ENCODE measurements at regions of chr3 and their contacts with region 1.

Region 1: GRCh38 chr3:119240591-119241434 is at the start of gene B4GALT4:
- DNase-seq: peak; percentile 81
- ATAC-seq: peak; percentile 78
- H3K4me3 Mint-ChIP-seq: peak within 1 kb of the TSS; percentile 83
- H3K27ac Mint-ChIP-seq: peak within 1 kb of the TSS; percentile 99
- H3K4me1 Mint-ChIP-seq: peaks cover 36% of the 10 kb centered on the region
- H3K27me3 Mint-ChIP-seq: no peaks in the 10 kb centered on the region
- CTCF ChIP-seq: no peak
- total RNA-seq, gene B4GALT4: 13.3 to 15.2 TPM

Region 2: GRCh38 chr3:119084371-119085072 is 156.3 kb before region 1 on chr3:
- CTCF ChIA-PET with region 1: no interaction called
- POLR2A ChIA-PET with region 1: no interaction called
- intact Hi-C with region 1: no loop called
- DNase-seq: no peak
- ATAC-seq: no peak
- H3K4me3 Mint-ChIP-seq: no peak overlapping the region
- H3K27ac Mint-ChIP-seq: no peak overlapping the region
- H3K4me1 Mint-ChIP-seq: no peaks in the 10 kb centered on the region
- H3K27me3 Mint-ChIP-seq: peaks cover 4% of the 10 kb centered on the region
- CTCF ChIP-seq: no peak

Region 3: GRCh38 chr3:119098619-119099222 is 142.1 kb before region 1 on chr3:
- CTCF ChIA-PET with region 1: interaction called, 12 read pairs
- POLR2A ChIA-PET with region 1: no interaction called
- intact Hi-C with region 1: no loop called
- DNase-seq: peak; percentile 3
- ATAC-seq: no peak
- H3K4me3 Mint-ChIP-seq: no peak overlapping the region
- H3K27ac Mint-ChIP-seq: no peak overlapping the region
- H3K4me1 Mint-ChIP-seq: no peaks in the 10 kb centered on the region
- H3K27me3 Mint-ChIP-seq: peaks cover 2% of the 10 kb centered on the region
- CTCF ChIP-seq: peak; percentile 89

Region 4: DNA sequence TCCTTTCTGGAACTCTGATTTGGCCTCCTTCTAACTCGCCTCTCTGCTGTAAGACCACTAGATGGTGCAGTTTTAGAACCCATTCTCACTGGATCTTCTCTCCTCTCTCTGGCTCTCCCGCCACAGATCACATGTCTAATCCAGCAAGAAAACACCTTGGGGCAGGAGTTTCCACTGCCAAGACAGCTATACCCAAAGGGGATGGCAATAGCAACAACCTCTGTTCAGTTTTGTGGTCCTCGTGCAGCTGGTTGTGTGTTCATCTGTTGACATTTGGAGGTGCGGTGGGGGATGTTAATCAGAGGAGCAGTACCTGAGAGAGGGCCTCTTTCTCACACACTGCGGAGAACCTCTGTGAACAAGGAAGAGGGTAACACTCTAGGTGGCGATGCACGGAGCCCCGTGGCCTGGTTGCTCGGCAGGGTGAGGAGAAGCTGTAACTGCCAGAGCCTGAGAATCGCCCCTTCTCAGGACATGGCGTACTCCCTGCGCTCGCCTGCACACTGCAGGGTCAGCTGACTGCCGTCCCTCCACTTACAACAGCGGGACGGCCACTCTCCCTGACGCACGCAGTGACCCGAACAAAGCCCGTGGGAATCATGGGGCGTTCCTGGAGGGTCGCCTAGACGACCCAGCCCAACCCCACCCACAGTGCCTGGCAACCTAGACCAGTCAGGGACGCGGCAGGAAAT is 95.2 kb before region 1 on chr3 and contains the start of gene TEX55:
- CTCF ChIA-PET with region 1: interaction called, 61 read pairs
- POLR2A ChIA-PET with region 1: interaction called, 6 read pairs
- intact Hi-C with region 1: loop called (anchors 1 kb)
- DNase-seq: peak; percentile 12
- ATAC-seq: peak; percentile 75
- H3K4me3 Mint-ChIP-seq: no peak within 1 kb of the TSS
- H3K27ac Mint-ChIP-seq: no peak within 1 kb of the TSS
- H3K4me1 Mint-ChIP-seq: peaks cover 3% of the 10 kb centered on the region
- H3K27me3 Mint-ChIP-seq: no peaks in the 10 kb centered on the region
- CTCF ChIP-seq: peak; percentile 69
- total RNA-seq, gene TEX55: not detected

Region 5: GRCh38 chr3:119352849-119353502 is 112.2 kb after region 1 on chr3:
- CTCF ChIA-PET with region 1: interaction called, 13 read pairs
- POLR2A ChIA-PET with region 1: interaction called, 3 read pairs
- intact Hi-C with region 1: no loop called
- DNase-seq: peak; percentile 23
- ATAC-seq: peak; percentile 61
- H3K4me3 Mint-ChIP-seq: no peak overlapping the region
- H3K27ac Mint-ChIP-seq: peak overlapping the region; percentile 45
- H3K4me1 Mint-ChIP-seq: peaks cover 31% of the 10 kb centered on the region
- H3K27me3 Mint-ChIP-seq: no peaks in the 10 kb centered on the region
- CTCF ChIP-seq: peak; percentile 42